ENCODE measurements at regions of chr9 and their contacts with region 1.

Region 1: DNA sequence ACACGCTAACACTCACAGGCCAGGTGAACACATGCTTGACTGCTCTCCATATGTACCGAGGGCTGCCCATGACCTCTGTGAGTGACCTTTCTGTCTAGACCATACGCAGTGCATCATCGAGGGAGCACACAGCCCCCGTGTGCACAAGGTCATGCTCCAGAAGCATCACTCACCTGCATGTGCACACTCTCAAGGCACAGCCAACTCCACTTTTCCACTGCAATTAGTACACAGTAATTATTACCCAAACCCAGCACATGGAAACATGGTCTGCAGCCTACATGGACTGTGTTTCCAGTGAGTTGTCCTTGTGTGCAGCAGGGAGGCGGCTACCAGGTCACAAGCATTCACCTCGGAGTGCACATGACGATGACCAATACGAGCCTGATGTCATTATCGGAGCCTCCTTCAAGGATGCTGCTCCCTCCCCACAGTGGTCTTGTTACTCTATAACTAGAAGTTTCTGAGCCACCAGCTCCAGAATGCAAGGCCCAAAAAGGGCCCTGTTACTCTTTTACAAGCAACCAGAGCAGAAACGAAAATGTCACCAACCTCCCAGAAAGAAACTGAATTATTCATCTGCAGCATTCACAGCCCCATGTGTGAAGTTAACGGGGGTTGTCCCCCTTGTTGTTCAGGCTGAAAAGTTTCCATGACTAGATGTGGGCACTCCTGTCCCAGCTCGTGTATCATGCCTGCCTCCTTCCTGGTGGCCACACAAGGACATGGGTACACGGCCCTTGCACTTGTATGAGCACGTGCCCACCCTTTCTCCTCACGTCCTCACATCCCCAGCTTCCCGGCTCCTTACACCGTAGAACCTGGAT is 31.2 kb downstream of the SEMA4D start:
- DNase-seq: peak in 4 of 9 experiments; percentile 38 to 70 (median 46)
- ATAC-seq: peak; percentile 7
- H3K4me3 ChIP-seq: peak overlapping the region in 1 of 2 experiments; percentile 38
- H3K4me3 Mint-ChIP-seq: peak overlapping the region; percentile 80
- H3K27ac ChIP-seq: peak overlapping the region; percentile 61 to 71
- H3K27ac Mint-ChIP-seq: peak overlapping the region; percentile 99
- H3K4me1 ChIP-seq: peaks cover 98% of the 10 kb centered on the region
- H3K4me1 Mint-ChIP-seq: peaks cover 96% of the 10 kb centered on the region
- H3K27me3 ChIP-seq: no peaks in the 10 kb centered on the region
- H3K27me3 Mint-ChIP-seq: no peaks in the 10 kb centered on the region
- CTCF ChIP-seq: no peak

Region 2: GRCh38 chr9:89442981-89443814 is 23.5 kb before region 1 on chr9:
- CTCF ChIA-PET with region 1: interaction called, 4 read pairs
- POLR2A ChIA-PET with region 1: interaction called, 8 read pairs
- intact Hi-C with region 1: loop called in 1 of 2 experiments (anchors 2 kb)
- DNase-seq: no peak
- ATAC-seq: no peak
- H3K4me3 ChIP-seq: peak overlapping the region in 1 of 2 experiments; percentile 10
- H3K4me3 Mint-ChIP-seq: no peak overlapping the region
- H3K27ac ChIP-seq: peak overlapping the region; percentile 46 to 50
- H3K27ac Mint-ChIP-seq: peak overlapping the region; percentile 97
- H3K4me1 ChIP-seq: peaks cover 97% of the 10 kb centered on the region
- H3K4me1 Mint-ChIP-seq: peaks cover 89% of the 10 kb centered on the region
- H3K27me3 ChIP-seq: no peaks in the 10 kb centered on the region
- H3K27me3 Mint-ChIP-seq: no peaks in the 10 kb centered on the region
- CTCF ChIP-seq: no peak

Region 3: GRCh38 chr9:89477811-89478630 is 11.4 kb after region 1 on chr9:
- CTCF ChIA-PET with region 1: interaction called, 5 read pairs
- POLR2A ChIA-PET with region 1: interaction called, 12 read pairs
- intact Hi-C with region 1: loop called (anchors 1 to 2 kb)
- DNase-seq: peak in 6 of 9 experiments; percentile 36 to 72 (median 66)
- ATAC-seq: peak; percentile 35
- H3K4me3 ChIP-seq: peak overlapping the region; percentile 44 to 50
- H3K4me3 Mint-ChIP-seq: peak overlapping the region; percentile 91
- H3K27ac ChIP-seq: peak overlapping the region; percentile 26 to 65
- H3K27ac Mint-ChIP-seq: peak overlapping the region; percentile 99
- H3K4me1 ChIP-seq: peaks cover 82% of the 10 kb centered on the region
- H3K4me1 Mint-ChIP-seq: peaks cover 90% of the 10 kb centered on the region
- H3K27me3 ChIP-seq: no peaks in the 10 kb centered on the region
- H3K27me3 Mint-ChIP-seq: no peaks in the 10 kb centered on the region
- CTCF ChIP-seq: no peak

Region 4: GRCh38 chr9:89536145-89536574 is 69.5 kb after region 1 on chr9:
- CTCF ChIA-PET with region 1: no interaction called
- POLR2A ChIA-PET with region 1: interaction called, 5 read pairs
- intact Hi-C with region 1: loop called in 1 of 2 experiments (anchors 5 kb)
- DNase-seq: peak in 2 of 9 experiments; percentile 73 to 88
- ATAC-seq: peak; percentile 83
- H3K4me3 ChIP-seq: peak overlapping the region; percentile 9 to 13
- H3K4me3 Mint-ChIP-seq: peak overlapping the region; percentile 73
- H3K27ac ChIP-seq: peak overlapping the region; percentile 29 to 79
- H3K27ac Mint-ChIP-seq: peak overlapping the region; percentile 94
- H3K4me1 ChIP-seq: peaks cover 96% of the 10 kb centered on the region
- H3K4me1 Mint-ChIP-seq: peaks cover 94% of the 10 kb centered on the region
- H3K27me3 ChIP-seq: no peaks in the 10 kb centered on the region
- H3K27me3 Mint-ChIP-seq: no peaks in the 10 kb centered on the region
- CTCF ChIP-seq: no peak

Measured in CD8-positive, alpha-beta T cell (primary cell).